Activated CD4-positive, alpha-beta T cell treated with anti-CD3 and anti-CD28 coated beads, Interleukin-2, amount 10 ng/mL, durations not matched to agents 7 days and 5 days (primary cell): ENCODE measurements at regions of chr7 and their contacts with region 1.

Region 1: DNA sequence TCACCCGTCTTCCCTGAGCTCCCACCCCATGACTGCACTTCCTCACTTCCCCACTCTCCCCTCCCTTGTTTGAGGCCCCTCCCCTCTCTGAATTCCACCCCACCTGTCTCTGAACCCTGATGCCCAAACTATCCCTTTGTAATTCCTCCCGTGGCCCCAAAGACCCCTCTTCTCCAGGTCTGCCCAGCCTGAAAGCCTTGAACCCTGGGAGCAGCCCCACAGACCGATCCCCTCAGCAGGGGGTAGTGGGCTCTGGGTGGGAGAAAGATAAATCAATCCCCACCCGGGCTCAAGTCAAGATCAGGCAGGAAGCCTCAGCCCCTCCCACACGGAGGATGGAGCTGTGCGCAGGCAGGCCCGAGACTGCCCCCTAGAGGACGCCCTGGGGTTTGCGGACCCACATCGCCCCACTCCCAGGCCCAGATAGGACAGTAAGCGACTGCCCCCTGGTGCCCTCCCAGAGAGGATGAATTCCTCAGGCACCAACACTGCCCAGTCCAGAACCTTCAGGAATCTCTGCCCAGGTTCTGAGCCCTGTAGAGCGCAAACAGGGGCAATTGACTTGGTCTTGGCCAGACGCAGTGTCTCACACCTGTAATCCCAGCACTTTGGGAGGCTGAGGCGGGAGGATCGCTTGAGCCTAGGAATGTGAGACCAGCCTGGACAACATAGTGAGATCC is 11.7 kb downstream of the HSPB1 start:
- DNase-seq: peak; percentile 96
- H3K4me3 Mint-ChIP-seq: no peak overlapping the region
- H3K27ac Mint-ChIP-seq: peak overlapping the region; percentile 76
- H3K4me1 Mint-ChIP-seq: peaks cover 25% of the 10 kb centered on the region
- H3K27me3 Mint-ChIP-seq: no peaks in the 10 kb centered on the region

Region 2: DNA sequence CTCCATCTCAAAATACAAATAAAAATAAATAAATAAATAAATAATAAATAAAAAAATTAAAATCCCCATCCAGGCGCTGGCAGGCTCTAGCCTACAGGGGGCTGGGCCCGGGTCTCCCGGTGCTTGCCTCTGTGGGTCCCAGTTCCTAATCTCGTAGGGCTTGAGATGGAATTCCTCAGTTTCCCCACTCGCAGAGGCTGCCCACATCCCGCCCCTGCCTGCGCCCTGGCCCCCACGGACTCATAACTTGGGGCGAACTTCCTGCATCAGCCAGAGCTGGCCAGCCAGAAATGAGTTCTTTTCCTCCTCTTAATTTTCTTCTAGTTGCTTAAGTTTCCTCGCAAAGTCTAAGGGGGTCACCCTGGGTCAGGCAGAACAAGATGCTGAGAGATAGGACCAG is 134.5 kb before region 1 on chr7:
- CTCF ChIA-PET with region 1: interaction called, 102 read pairs
- POLR2A ChIA-PET with region 1: no interaction called
- DNase-seq: no peak
- H3K4me3 Mint-ChIP-seq: no peak overlapping the region
- H3K27ac Mint-ChIP-seq: no peak overlapping the region
- H3K4me1 Mint-ChIP-seq: peaks cover 2% of the 10 kb centered on the region
- H3K27me3 Mint-ChIP-seq: no peaks in the 10 kb centered on the region

Region 3: DNA sequence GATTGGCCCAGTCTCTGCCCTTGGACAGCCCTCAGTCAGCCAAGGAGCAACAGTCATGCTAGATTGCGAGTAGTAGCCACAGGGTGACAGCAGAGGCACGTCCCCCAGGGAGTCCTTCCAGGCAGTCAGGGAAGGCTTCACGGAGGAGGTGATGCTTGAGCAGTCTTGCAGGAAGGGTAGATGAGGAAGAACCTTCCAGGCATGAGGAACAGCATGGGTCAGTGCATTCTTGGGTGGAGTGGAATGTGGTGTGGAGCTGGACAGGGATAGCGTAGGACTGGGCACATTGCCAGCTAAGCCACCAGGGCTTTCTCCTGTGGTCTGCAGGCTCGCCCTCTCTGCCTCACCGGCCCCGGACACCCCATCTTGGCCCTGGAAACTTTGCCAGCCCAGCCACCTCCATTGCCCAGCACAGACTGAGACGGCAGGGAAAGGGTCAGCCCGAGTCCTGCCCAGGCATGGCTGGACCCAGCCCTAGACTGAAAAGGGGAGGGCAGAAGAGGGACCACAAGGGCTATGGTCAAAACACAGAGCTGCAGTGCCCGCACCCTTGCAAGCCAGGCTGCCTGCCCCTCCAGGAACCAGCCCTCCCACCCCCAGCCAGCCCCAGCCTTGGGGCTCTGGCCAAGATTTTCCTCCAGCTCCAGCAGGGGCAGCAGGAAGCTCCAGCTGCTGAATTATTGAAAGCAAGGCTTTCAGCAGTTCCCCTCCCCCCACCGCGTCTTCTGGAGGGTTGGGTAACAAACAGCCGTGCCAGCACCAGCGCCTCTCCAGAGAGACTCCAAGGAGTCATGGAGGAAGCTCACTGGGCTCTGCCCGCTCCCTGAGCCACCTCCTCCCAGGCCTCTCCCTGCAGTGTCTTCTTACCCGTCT is 93.8 kb before region 1 on chr7:
- CTCF ChIA-PET with region 1: no interaction called
- POLR2A ChIA-PET with region 1: no interaction called
- DNase-seq: no peak
- H3K4me3 Mint-ChIP-seq: no peak overlapping the region
- H3K27ac Mint-ChIP-seq: no peak overlapping the region
- H3K4me1 Mint-ChIP-seq: no peaks in the 10 kb centered on the region
- H3K27me3 Mint-ChIP-seq: peaks cover 25% of the 10 kb centered on the region

Region 4: DNA sequence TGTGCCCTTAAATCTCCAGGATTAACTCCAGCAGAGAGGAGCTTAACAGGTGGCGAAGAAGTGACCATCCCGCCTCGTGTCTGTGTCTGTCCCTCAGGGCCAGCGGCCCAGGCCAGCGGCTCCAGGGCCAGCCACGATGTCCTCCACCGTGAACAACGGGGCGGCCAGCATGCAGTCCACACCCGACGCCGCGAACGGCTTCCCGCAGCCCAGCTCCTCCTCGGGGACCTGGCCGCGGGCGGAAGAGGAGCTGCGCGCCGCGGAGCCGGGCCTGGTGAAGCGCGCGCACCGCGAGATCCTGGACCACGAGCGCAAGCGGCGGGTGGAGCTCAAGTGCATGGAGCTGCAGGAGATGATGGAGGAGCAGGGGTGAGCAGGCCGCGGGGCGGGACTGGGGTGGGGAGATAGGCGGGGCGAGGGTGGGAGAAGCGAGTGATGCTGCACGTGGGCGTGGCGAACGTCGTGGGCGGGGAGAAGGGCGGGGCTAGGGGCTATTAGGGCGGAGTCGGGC is 79.2 kb before region 1 on chr7:
- CTCF ChIA-PET with region 1: interaction called, 10 read pairs
- POLR2A ChIA-PET with region 1: no interaction called
- DNase-seq: peak; percentile 84
- H3K4me3 Mint-ChIP-seq: peak overlapping the region; percentile 43
- H3K27ac Mint-ChIP-seq: no peak overlapping the region
- H3K4me1 Mint-ChIP-seq: peaks cover 10% of the 10 kb centered on the region
- H3K27me3 Mint-ChIP-seq: peaks cover 32% of the 10 kb centered on the region

Region 5: DNA sequence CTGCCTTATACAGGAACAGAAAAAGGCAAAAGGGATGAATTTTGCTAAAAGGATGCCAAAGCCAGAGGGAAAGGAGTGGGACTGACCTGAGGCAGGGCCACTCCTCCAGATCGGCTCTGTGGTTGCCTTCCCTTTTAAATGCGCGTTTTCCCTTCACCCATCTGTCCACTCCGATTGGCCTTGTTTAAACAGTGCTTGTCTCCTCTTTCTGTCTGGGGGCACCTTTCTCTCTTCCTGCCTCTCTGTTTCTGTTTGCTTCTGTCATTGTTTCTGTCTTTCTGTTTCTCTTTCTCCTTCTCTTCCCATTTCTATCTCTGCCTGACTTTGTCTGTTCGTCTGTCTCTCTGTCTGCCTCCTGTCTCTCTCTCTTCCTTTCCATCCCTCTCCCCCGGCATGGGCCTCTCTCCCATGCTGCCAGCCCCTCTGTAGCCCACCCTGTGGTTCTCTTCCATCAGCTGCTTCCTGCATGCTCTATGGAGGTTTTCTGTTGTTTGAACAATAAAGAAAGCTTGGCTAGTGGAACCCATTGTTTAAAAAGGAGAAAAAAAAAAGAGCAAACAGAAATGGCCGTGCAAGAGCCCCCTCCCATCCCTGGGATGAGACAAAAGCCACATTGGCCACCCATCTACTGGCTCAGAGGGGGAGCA is 41.2 kb before region 1 on chr7:
- CTCF ChIA-PET with region 1: interaction called, 14 read pairs
- POLR2A ChIA-PET with region 1: no interaction called
- DNase-seq: no peak
- H3K4me3 Mint-ChIP-seq: peak overlapping the region; percentile 9
- H3K27ac Mint-ChIP-seq: peak overlapping the region; percentile 86
- H3K4me1 Mint-ChIP-seq: peaks cover 30% of the 10 kb centered on the region
- H3K27me3 Mint-ChIP-seq: peaks cover 26% of the 10 kb centered on the region

Region 6: DNA sequence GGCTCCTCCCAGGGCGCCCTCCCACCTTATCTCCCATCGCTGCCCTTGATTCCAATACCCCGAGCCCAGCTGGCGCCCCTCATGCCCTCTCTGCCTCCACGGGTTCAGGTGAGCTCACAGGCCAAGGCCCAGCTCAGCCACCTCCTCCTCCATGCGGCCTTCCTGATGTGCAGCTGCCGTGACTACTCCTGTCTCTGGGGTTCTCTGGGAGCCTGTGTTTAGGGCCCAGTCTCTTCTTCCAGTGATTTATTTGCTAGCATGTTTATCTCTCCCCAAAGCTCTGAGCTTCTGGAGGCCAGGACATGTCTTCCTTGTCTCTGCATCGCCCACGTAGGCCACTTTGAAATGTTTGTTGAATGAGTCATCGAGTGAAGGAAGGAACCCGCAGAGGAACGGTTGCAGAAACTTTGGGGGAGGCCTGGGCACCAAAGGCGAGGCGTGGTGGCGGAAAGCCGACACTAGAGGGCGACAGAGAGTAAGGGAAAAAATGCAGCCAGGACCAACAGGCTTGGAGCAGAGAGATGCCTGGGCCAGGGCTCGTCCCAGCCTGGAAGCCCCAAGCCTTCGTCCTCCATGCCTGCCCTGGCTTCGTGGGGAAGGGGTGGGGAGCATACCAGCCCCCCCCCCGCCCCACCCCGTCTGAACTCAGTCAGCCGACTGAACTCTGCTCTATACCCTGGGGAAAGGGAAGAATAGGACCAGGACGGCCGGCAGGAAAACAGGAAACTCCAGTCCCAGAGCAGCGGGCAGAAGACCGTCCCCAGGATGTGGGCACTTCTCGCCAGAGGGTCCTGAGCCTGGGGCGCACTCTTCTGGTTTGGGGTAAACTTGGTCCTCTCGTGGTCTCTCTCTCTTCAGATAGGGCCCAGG is 22.6 kb before region 1 on chr7:
- CTCF ChIA-PET with region 1: interaction called, 24 read pairs
- POLR2A ChIA-PET with region 1: interaction called, 5 read pairs
- DNase-seq: peak; percentile 84
- H3K4me3 Mint-ChIP-seq: no peak overlapping the region
- H3K27ac Mint-ChIP-seq: peak overlapping the region; percentile 52
- H3K4me1 Mint-ChIP-seq: peaks cover 11% of the 10 kb centered on the region
- H3K27me3 Mint-ChIP-seq: peaks cover 4% of the 10 kb centered on the region

Region 7: GRCh38 chr7:76327610-76328009 is 13.4 kb after region 1 on chr7:
- CTCF ChIA-PET with region 1: interaction called, 12 read pairs
- POLR2A ChIA-PET with region 1: no interaction called
- DNase-seq: no peak
- H3K4me3 Mint-ChIP-seq: no peak overlapping the region
- H3K27ac Mint-ChIP-seq: peak overlapping the region; percentile 34
- H3K4me1 Mint-ChIP-seq: peaks cover 38% of the 10 kb centered on the region
- H3K27me3 Mint-ChIP-seq: no peaks in the 10 kb centered on the region